Activated CD4-positive, alpha-beta T cell treated with anti-CD3 and anti-CD28 coated beads for 36 hours (primary cell): ENCODE measurements at regions of chr1 and their contacts with region 1.

Region 1: DNA sequence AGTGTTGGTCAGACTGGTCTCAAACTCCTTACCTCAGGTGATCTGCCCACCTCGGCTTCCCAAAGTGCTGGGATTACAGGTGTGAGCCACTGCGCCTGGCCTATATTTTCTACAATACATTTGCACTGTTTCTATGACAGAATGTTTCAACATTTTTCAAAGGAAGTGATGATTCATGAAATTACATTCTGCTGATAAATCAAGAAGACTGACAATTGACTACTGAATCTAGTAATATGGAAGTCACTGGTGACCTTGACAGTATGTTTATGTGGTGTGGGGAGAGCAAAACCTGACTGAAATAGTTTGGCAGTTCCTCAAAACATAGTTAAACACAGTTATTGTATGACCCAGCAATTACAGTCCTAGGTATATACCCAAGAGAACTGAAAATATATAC is 18.1 kb downstream of the LRIF1 start:
- DNase-seq: no peak
- ATAC-seq: no peak
- H3K4me3 Mint-ChIP-seq: no peak overlapping the region
- H3K27ac Mint-ChIP-seq: no peak overlapping the region
- H3K4me1 Mint-ChIP-seq: peaks cover 3% of the 10 kb centered on the region
- H3K27me3 Mint-ChIP-seq: no peaks in the 10 kb centered on the region

Region 2: DNA sequence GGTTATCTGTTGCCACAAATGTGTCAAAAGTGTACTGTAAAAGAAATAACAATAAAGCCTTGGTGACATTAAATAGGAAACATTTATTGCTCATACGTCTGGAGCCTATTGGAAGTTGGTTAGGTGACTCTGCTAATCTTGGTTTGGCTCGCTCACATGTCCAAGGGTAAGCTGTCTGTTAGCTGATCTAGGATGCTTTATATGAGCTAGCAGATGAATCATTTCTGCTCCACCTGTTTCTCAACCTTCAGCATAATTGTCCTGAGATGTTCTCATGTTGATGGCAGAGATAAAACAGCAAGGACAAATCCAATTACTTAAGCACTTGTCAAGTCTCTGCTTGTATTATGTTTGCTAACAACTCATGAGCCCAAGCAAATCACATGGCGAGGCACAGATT is 128.7 kb before region 1 on chr1:
- CTCF ChIA-PET with region 1: no interaction called
- POLR2A ChIA-PET with region 1: no interaction called
- intact Hi-C with region 1: no loop called
- DNase-seq: no peak
- ATAC-seq: no peak
- H3K4me3 Mint-ChIP-seq: no peak overlapping the region
- H3K27ac Mint-ChIP-seq: no peak overlapping the region
- H3K4me1 Mint-ChIP-seq: no peaks in the 10 kb centered on the region
- H3K27me3 Mint-ChIP-seq: no peaks in the 10 kb centered on the region

Region 3: GRCh38 chr1:110957798-110958197 is 12.2 kb after region 1 on chr1:
- CTCF ChIA-PET with region 1: interaction called, 6 read pairs
- POLR2A ChIA-PET with region 1: no interaction called
- intact Hi-C with region 1: loop called in 1 of 2 experiments (anchors 1 kb)
- DNase-seq: no peak
- ATAC-seq: no peak
- H3K4me3 Mint-ChIP-seq: no peak overlapping the region
- H3K27ac Mint-ChIP-seq: no peak overlapping the region
- H3K4me1 Mint-ChIP-seq: peaks cover 16% of the 10 kb centered on the region
- H3K27me3 Mint-ChIP-seq: no peaks in the 10 kb centered on the region